HepG2 (cell line): ENCODE measurements at regions of chr18 and their contacts with region 1.

Region 1: GRCh38 chr18:23586249-23587196 is at the start of gene NPC1:
- DNase-seq: peak; percentile 94
- ATAC-seq: peak; percentile 92
- H3K4me3 ChIP-seq: peak within 1 kb of the TSS; percentile 85 to 99 (median 96)
- H3K27ac ChIP-seq: peak within 1 kb of the TSS; percentile 100
- H3K4me1 ChIP-seq: peaks cover 58% of the 10 kb centered on the region
- H3K27me3 ChIP-seq: peaks cover 0 to 5% of the 10 kb centered on the region in 2 experiments; a peak in 1 of 5 replicates
- CTCF ChIP-seq: peak; percentile 80
- EP300 ChIP-seq: no peak
- POLR2A ChIP-seq: peak; percentile 72 to 73
- RAD21 ChIP-seq: peak; percentile 81
- total RNA-seq, gene NPC1: 28.6 and 46.5 TPM in 2 replicates

Region 2: GRCh38 chr18:23515911-23516546 is 70.5 kb before region 1 on chr18:
- CTCF ChIA-PET with region 1: interaction called, 4 read pairs
- POLR2A ChIA-PET with region 1: interaction called, 3 read pairs
- in situ Hi-C with region 1: loop called (anchors 5 kb)
- intact Hi-C with region 1: loop called (anchors 1 kb)
- DNase-seq: peak; percentile 76
- ATAC-seq: peak; percentile 99
- H3K4me3 ChIP-seq: no peak overlapping the region
- H3K27ac ChIP-seq: peak overlapping the region; percentile 17
- H3K4me1 ChIP-seq: peaks cover 5% of the 10 kb centered on the region; the same call in 1 of the 2 replicates
- H3K27me3 ChIP-seq: no peaks in the 10 kb centered on the region
- CTCF ChIP-seq: peak; percentile 96
- EP300 ChIP-seq: no peak
- POLR2A ChIP-seq: no peak
- RAD21 ChIP-seq: peak; percentile 72

Region 3: GRCh38 chr18:23532848-23533247 is 53.7 kb before region 1 on chr18:
- CTCF ChIA-PET with region 1: no interaction called
- POLR2A ChIA-PET with region 1: no interaction called
- in situ Hi-C with region 1: no loop called
- intact Hi-C with region 1: no loop called
- DNase-seq: no peak
- ATAC-seq: no peak
- H3K4me3 ChIP-seq: no peak overlapping the region
- H3K27ac ChIP-seq: no peak overlapping the region
- H3K4me1 ChIP-seq: peaks cover 10% of the 10 kb centered on the region
- H3K27me3 ChIP-seq: no peaks in the 10 kb centered on the region
- CTCF ChIP-seq: no peak
- EP300 ChIP-seq: no peak
- POLR2A ChIP-seq: no peak
- RAD21 ChIP-seq: no peak

Region 4: GRCh38 chr18:23547846-23548245 is 38.7 kb before region 1 on chr18:
- CTCF ChIA-PET with region 1: no interaction called
- POLR2A ChIA-PET with region 1: interaction called, 10 read pairs
- in situ Hi-C with region 1: loop called (anchors 5 kb)
- intact Hi-C with region 1: loop called (anchors 2 kb)
- DNase-seq: peak; percentile 35
- ATAC-seq: peak; percentile 57
- H3K4me3 ChIP-seq: no peak overlapping the region
- H3K27ac ChIP-seq: peak overlapping the region; percentile 75
- H3K4me1 ChIP-seq: peaks cover 59% of the 10 kb centered on the region
- H3K27me3 ChIP-seq: no peaks in the 10 kb centered on the region
- CTCF ChIP-seq: no peak
- EP300 ChIP-seq: no peak
- POLR2A ChIP-seq: no peak
- RAD21 ChIP-seq: no peak